ENCODE measurements at regions of chr3 and their contacts with region 1.

Region 1: DNA sequence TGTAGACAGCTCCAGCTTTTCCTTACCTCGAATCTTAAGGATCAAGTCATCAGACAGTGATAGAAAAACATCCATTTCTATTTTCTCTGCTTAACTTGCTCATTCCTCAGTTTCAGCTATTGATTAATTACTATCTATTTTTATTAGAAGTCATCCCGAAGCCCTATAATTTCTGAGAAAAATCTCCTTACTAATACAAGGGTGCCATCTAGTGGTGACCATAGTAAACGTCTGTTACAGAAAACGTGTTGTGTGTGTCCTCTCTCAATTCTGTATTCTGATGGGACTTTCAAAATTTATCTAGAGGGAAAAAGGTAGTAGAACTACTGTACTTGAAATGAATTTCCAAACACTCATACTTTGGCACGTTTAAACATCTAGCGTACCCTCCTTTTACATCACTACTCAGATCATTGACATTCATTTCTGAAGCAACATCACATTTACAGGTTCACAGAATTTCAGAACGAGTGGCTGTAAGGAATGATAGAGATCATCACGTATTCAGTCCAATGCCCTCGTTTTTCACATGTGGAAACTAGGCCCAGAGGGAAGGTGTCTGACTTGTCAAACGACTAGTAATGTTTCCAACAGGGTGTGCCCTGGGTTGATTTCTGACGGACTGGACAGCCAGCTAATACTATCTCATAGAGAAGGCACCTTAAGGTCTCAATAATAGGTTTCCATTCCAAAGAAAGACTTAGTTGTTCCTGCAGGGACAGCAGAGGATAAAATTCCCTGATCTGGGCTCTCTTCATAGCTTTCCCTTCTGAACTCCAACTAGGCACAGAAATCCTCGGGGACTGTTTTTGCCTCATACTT is 25.6 kb downstream of the HACD2 start:
- DNase-seq: no peak
- H3K4me3 Mint-ChIP-seq: no peak overlapping the region
- H3K27ac Mint-ChIP-seq: no peak overlapping the region
- H3K4me1 Mint-ChIP-seq: peaks cover 16% of the 10 kb centered on the region
- H3K27me3 Mint-ChIP-seq: no peaks in the 10 kb centered on the region

Region 2: DNA sequence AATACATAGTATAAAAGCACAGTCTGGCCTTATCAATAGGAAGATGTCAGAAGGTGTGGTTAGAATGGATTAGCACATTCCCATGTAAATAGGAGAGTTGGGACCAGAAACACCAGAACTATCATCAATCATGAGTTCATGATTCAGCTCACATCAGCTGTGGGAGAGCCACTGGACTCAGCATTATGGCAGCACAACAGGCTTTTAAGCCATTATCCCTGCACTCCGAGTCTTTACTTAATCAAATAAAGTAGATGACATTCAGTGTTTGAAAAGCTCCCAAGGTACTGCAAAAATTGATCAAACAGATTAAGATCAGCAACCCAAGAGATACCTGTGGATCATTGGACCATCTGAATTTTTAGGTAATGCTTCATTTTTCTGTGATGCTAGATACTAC is 853.9 kb before region 1 on chr3:
- CTCF ChIA-PET with region 1: no interaction called
- POLR2A ChIA-PET with region 1: no interaction called
- intact Hi-C with region 1: no loop called
- DNase-seq: no peak
- H3K4me3 Mint-ChIP-seq: no peak overlapping the region
- H3K27ac Mint-ChIP-seq: no peak overlapping the region
- H3K4me1 Mint-ChIP-seq: peaks cover 18% of the 10 kb centered on the region
- H3K27me3 Mint-ChIP-seq: no peaks in the 10 kb centered on the region

Region 3: DNA sequence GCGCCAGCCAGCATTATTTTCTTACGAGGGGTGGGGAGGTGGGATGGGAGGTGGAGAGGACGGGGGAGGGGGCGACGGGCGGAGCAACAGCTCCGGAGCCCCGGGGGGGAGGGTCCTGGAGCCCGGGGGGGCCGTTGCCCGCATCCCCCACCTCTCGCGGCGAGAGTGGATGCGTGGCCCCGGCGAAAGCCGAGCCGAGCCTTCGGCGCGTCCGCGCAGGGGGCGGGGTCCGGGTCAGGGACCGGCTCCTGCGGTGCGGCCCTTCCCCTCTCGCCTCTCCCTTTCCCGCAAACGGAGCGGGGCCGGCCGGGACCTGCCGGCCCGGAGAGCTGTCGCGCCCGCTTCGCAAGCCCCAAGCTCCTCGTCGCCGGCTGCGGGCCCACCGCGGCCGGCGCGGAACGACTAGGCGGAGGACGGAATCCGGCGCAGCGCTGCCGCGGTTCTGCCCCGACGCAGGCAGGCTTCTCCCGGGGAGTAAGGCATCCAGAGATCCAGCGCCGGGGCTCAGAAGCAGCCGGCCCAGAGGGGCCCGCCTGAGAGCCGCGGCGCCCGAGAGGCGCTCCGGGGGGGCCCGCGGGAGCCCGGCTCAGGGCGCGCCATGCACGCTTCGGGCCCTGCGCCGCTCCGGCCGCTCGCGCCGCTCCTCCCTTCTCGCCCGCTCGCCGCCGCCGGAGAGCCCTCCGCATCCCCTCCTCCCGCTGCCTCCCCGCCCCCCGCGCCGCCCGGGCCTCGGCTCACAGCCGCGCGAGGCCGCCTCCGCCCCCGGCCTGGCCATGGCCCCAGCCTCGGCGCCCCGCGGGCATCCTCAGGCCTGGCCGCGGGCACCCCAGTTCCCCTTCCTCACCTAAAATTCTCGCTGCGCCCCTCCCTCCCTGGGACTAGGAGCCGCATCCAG is 109.9 kb before region 1 on chr3:
- CTCF ChIA-PET with region 1: interaction called, 13 read pairs
- POLR2A ChIA-PET with region 1: no interaction called
- intact Hi-C with region 1: loop called (anchors 2 kb)
- DNase-seq: no peak
- H3K4me3 Mint-ChIP-seq: peak overlapping the region; percentile 29
- H3K27ac Mint-ChIP-seq: no peak overlapping the region
- H3K4me1 Mint-ChIP-seq: peaks cover 2% of the 10 kb centered on the region
- H3K27me3 Mint-ChIP-seq: peaks cover 41% of the 10 kb centered on the region

Region 4: GRCh38 chr3:123525433-123525832 is 33.8 kb before region 1 on chr3:
- CTCF ChIA-PET with region 1: interaction called, 10 read pairs
- POLR2A ChIA-PET with region 1: no interaction called
- intact Hi-C with region 1: no loop called
- DNase-seq: peak; percentile 18
- H3K4me3 Mint-ChIP-seq: no peak overlapping the region
- H3K27ac Mint-ChIP-seq: no peak overlapping the region
- H3K4me1 Mint-ChIP-seq: peaks cover 50% of the 10 kb centered on the region
- H3K27me3 Mint-ChIP-seq: no peaks in the 10 kb centered on the region

Region 5: GRCh38 chr3:123547881-123548519 is 11.3 kb before region 1 on chr3:
- CTCF ChIA-PET with region 1: interaction called, 26 read pairs
- POLR2A ChIA-PET with region 1: no interaction called
- intact Hi-C with region 1: no loop called
- DNase-seq: no peak
- H3K4me3 Mint-ChIP-seq: no peak overlapping the region
- H3K27ac Mint-ChIP-seq: no peak overlapping the region
- H3K4me1 Mint-ChIP-seq: peaks cover 5% of the 10 kb centered on the region
- H3K27me3 Mint-ChIP-seq: no peaks in the 10 kb centered on the region